ENCODE measurements at regions of chr7 and their contacts with region 1.

Region 1: GRCh38 chr7:87910138-87910537 is 23.9 kb upstream of the ADAM22 start:
- DNase-seq: no peak
- ATAC-seq: no peak
- H3K4me3 Mint-ChIP-seq: no peak overlapping the region
- H3K27ac Mint-ChIP-seq: no peak overlapping the region
- H3K4me1 Mint-ChIP-seq: no peaks in the 10 kb centered on the region
- H3K27me3 Mint-ChIP-seq: no peaks in the 10 kb centered on the region
- CTCF ChIP-seq: no peak

Region 2: GRCh38 chr7:87853237-87853864 is 56.8 kb before region 1 on chr7:
- CTCF ChIA-PET with region 1: no interaction called
- POLR2A ChIA-PET with region 1: interaction called, 15 read pairs
- intact Hi-C with region 1: no loop called
- DNase-seq: no peak
- ATAC-seq: no peak
- H3K4me3 Mint-ChIP-seq: no peak overlapping the region
- H3K27ac Mint-ChIP-seq: no peak overlapping the region
- H3K4me1 Mint-ChIP-seq: peaks cover 20% of the 10 kb centered on the region
- H3K27me3 Mint-ChIP-seq: no peaks in the 10 kb centered on the region
- CTCF ChIP-seq: no peak

Region 3: DNA sequence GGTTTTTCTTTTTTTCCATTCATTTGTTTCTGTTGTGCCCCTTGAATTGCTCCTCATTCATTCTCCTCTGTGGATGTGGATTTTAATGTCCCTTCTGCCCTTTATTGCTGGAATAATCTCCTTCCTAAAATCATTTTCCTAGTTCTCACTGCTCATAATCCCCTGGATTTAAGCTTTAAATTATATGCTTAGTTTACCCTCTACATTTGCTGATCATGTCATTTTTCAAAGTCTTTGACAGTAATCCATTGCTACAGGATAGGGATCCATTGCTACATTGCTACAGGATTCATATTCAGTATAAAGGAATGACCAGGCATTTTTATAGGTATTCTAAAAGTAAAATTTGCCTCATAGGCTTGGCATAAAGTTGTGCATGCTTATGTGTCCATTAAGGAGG is 38.2 kb after region 1 on chr7:
- CTCF ChIA-PET with region 1: no interaction called
- POLR2A ChIA-PET with region 1: no interaction called
- intact Hi-C with region 1: no loop called
- DNase-seq: no peak
- ATAC-seq: no peak
- H3K4me3 Mint-ChIP-seq: no peak overlapping the region
- H3K27ac Mint-ChIP-seq: no peak overlapping the region
- H3K4me1 Mint-ChIP-seq: no peaks in the 10 kb centered on the region
- H3K27me3 Mint-ChIP-seq: no peaks in the 10 kb centered on the region
- CTCF ChIP-seq: no peak

Region 4: GRCh38 chr7:89339748-89340147 is 1429.6 kb after region 1 on chr7:
- CTCF ChIA-PET with region 1: no interaction called
- POLR2A ChIA-PET with region 1: no interaction called
- intact Hi-C with region 1: no loop called
- DNase-seq: no peak
- ATAC-seq: no peak
- H3K4me3 Mint-ChIP-seq: no peak overlapping the region
- H3K27ac Mint-ChIP-seq: no peak overlapping the region
- H3K4me1 Mint-ChIP-seq: no peaks in the 10 kb centered on the region
- H3K27me3 Mint-ChIP-seq: no peaks in the 10 kb centered on the region
- CTCF ChIP-seq: no peak

Measured in activated B cell treated with CpG ODN at 0.5 μM for 24 hours (primary cell).